ENCODE measurements at regions of chr15 and their contacts with region 1.

Region 1: DNA sequence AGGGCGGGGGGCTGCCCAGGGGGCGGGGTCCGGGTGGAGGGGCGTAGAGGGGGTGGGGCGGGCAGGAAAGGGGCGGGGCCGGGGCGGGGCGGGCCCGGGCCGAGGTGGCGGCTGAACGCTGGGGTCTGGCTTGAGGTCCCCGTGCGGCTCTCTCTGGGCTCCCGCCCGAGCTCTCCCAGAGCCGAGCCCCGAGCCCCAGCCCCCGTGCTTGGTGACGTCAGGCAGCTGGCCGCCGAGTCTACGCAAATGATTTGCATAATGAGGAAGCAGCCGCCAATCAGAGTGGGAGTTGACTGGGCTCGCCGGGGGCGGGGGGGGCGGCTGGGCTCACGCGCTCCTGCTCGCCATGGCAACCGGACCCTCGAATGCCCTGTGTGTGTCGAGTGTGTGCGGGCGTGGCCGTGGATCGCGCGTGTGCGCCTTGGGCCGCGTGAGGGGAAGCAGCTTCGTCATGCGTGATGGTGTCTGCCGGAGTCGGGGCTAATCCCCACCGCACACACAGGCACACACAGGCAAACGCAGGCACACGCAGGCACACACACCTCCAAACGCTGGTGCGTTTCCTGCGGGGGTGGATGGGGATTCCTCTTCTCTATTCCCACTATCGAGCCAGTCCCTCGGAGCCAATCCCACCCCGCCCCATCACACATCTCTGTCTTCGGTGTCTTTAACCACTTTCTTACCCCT is at the start of gene CELF6:
- DNase-seq: no peak
- ATAC-seq: no peak
- H3K4me3 ChIP-seq: no peak within 1 kb of the TSS
- H3K27ac ChIP-seq: no peak within 1 kb of the TSS
- H3K4me1 ChIP-seq: no peaks in the 10 kb centered on the region
- H3K27me3 ChIP-seq: no peaks in the 10 kb centered on the region
- CTCF ChIP-seq: no peak
- POLR2A ChIP-seq: no peak
- RAD21 ChIP-seq: no peak
- total RNA-seq, gene CELF6: 0.52 TPM

Region 2: GRCh38 chr15:72585476-72586082 is 265.5 kb after region 1 on chr15:
- CTCF ChIA-PET with region 1: no interaction called
- POLR2A ChIA-PET with region 1: no interaction called
- RAD21 ChIA-PET with region 1: no interaction called
- intact Hi-C with region 1: loop called (anchors 10 kb)
- DNase-seq: no peak
- ATAC-seq: peak; percentile 71
- H3K4me3 ChIP-seq: no peak overlapping the region
- H3K27ac ChIP-seq: no peak overlapping the region
- H3K4me1 ChIP-seq: no peaks in the 10 kb centered on the region
- H3K27me3 ChIP-seq: no peaks in the 10 kb centered on the region
- CTCF ChIP-seq: peak; percentile 14 to 49 (median 33); a peak in 4 of 6 replicates
- POLR2A ChIP-seq: no peak
- RAD21 ChIP-seq: peak; percentile 36

Measured in HCT116 (cell line).